ENCODE measurements at regions of chr6 and their contacts with region 1.

Region 1: DNA sequence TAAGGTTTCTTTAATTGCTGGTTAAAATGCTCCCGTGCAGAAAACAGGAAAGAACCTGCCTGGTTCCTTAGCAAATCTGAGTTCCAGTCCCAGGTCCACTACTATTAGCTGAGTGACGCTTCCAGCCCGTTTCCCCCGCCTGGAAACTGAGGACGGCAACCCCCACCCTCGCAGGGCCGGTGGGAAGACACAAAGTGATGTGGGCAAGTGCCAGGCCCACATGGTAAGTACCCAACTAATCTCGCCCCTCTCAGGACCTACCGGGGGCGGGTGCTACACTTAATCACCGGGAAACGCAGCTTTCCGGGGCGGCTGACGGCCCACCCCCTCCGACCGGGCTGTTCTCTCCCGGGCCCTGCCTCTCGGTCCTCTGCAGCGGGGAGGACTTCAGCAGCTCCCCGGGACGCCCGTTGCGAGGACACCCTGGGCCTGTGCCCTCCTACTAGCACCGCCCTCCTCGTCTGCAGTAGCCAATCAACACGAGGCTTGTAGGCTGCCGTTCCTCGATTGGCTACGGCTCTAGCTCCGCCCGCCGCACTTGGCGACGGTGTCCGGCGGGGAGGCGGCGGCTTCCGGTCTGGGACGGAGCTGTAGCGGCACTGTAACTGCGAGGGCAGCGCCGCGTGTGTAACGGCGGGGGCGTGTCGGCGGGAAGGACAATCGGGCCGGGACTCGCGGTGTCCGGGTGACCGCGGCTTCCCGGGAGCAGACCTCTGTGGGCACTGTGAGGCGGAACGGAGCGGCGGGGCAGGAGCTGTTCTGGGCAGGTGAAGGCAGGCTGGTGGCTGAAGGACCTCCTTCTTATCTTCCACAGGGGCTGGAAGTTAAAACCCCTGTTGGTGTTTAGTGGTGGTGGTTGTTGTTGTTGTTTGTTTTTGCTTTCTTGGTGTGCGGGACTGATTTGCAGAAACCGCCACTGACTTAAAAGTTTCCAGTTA is at the start of gene ZBTB9:
- DNase-seq: peak; percentile 92 to 96 (median 92)
- H3K4me3 ChIP-seq: peak within 1 kb of the TSS; percentile 84 to 89
- H3K4me3 Mint-ChIP-seq: peak within 1 kb of the TSS; percentile 93 to 99 (median 97)
- H3K27ac ChIP-seq: peak within 1 kb of the TSS; percentile 78
- H3K27ac Mint-ChIP-seq: peak within 1 kb of the TSS; percentile 82 to 98 (median 95)
- H3K4me1 ChIP-seq: peaks cover 29% of the 10 kb centered on the region
- H3K4me1 Mint-ChIP-seq: peaks cover 14 to 43% (median 29%) of the 10 kb centered on the region in 4 donors
- H3K27me3 ChIP-seq: no peaks in the 10 kb centered on the region
- H3K27me3 Mint-ChIP-seq: no peaks in the 10 kb centered on the region
- total RNA-seq, gene ZBTB9: 12.1 to 12.8 TPM

Region 2: DNA sequence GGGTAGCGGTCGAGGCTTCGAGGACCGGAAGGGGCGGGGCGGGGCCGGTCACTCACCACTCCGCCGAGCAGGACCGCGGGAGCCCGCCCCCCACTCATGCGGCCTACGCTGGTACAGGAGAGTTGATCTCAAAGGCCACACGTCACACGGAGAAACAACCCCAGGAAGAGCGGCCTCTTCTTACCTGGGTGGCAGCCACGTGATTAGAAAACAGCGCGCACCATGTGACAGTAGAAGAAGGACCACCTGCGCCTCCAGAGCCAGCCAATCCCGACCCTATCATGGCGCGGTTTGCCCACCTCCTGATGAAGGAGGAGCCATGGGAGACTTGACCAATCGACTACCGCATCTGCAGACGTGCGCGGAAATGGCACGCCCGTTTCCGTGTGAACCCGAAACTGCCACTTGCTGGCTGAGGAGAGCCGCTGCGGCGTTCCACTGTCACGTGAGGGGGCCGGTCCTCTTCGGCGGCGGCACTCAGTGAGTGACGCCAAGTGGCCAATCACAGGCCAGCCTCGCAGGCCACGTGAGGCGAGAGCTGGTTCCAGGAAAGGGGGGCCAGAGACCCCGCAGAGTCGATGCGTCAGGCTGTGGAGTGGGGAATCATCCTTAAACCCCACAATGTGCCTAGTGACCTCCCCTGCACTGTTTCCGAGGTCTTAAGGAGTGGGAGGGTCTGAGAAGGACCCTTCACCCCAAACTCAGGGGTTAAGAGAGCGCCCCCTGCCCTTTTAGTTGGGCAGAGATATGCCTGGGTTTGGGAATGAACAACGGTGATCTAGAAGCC is 36.2 kb before region 1 on chr6 and contains the start of gene CUTA:
- CTCF ChIA-PET with region 1: interaction called, 6 read pairs
- POLR2A ChIA-PET with region 1: interaction called, 35 read pairs
- intact Hi-C with region 1: no loop called
- DNase-seq: peak; percentile 97 to 100 (median 100)
- H3K4me3 ChIP-seq: peak within 1 kb of the TSS; percentile 82 to 94
- H3K4me3 Mint-ChIP-seq: peak within 1 kb of the TSS; percentile 87 to 97 (median 94)
- H3K27ac ChIP-seq: peak within 1 kb of the TSS; percentile 97
- H3K27ac Mint-ChIP-seq: peak within 1 kb of the TSS; percentile 99 to 100 (median 99)
- H3K4me1 ChIP-seq: peaks cover 72% of the 10 kb centered on the region
- H3K4me1 Mint-ChIP-seq: peaks cover 43 to 87% (median 61%) of the 10 kb centered on the region in 4 donors
- H3K27me3 ChIP-seq: no peaks in the 10 kb centered on the region
- H3K27me3 Mint-ChIP-seq: no peaks in the 10 kb centered on the region
- total RNA-seq, gene CUTA: 210 to 217 TPM

Region 3: GRCh38 chr6:33508935-33509926 is 55.0 kb after region 1 on chr6:
- CTCF ChIA-PET with region 1: no interaction called
- POLR2A ChIA-PET with region 1: no interaction called
- intact Hi-C with region 1: no loop called
- DNase-seq: no peak
- H3K4me3 ChIP-seq: no peak overlapping the region
- H3K4me3 Mint-ChIP-seq: no peak overlapping the region
- H3K27ac ChIP-seq: no peak overlapping the region
- H3K27ac Mint-ChIP-seq: peak overlapping the region in 1 of 7 donors; percentile 4
- H3K4me1 ChIP-seq: peaks cover 8% of the 10 kb centered on the region
- H3K4me1 Mint-ChIP-seq: peaks cover 2 to 21% (median 8%) of the 10 kb centered on the region in 4 donors
- H3K27me3 ChIP-seq: no peaks in the 10 kb centered on the region
- H3K27me3 Mint-ChIP-seq: peaks cover 0 to 6% of the 10 kb centered on the region in 2 donors